ENCODE measurements at regions of chr5 and their contacts with region 1.

Region 1: DNA sequence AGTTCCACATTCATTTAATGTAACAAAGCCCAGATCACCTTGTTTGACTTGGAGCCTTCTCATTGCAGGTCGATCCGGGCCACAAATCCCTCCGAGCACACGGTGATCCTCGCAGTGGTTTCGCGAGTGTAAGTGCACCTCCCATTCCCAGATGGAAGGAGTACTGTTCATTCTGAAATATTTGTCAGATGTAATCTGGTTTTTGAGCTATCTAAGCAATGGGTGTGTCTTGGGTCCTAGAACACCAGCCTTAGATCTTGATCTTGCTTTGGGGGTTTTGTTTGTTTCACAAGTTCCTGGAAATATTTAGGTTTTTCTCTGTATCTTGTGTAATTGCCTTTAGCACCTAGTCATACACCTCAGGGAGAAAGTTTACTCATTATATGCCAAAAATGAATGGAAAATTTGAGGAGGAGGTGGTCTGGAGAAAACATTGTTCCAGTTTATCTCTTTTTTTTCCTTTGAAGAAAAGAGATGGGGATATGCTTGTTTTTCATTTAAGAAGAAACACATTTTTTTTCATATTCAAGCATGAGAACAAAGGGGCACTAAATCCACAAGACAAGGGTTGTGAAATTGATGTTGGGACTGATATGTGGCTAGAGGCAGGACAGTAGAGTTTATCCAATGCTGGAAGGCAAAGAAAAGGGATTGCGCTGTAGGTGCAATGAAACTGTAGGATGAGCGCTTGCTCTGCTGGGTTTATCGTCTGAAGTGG is 118.6 kb downstream of the PDE8B start:
- DNase-seq: no peak
- H3K4me3 Mint-ChIP-seq: peak overlapping the region; percentile 0
- H3K27ac Mint-ChIP-seq: peak overlapping the region; percentile 89
- H3K4me1 Mint-ChIP-seq: peaks cover 20% of the 10 kb centered on the region
- H3K27me3 Mint-ChIP-seq: peaks cover 8% of the 10 kb centered on the region

Region 2: GRCh38 chr5:77259476-77259875 is 69.6 kb before region 1 on chr5:
- intact Hi-C with region 1: loop called (anchors 1 kb)
- DNase-seq: no peak
- H3K4me3 Mint-ChIP-seq: no peak overlapping the region
- H3K27ac Mint-ChIP-seq: peak overlapping the region; percentile 62
- H3K4me1 Mint-ChIP-seq: peaks cover 7% of the 10 kb centered on the region
- H3K27me3 Mint-ChIP-seq: peaks cover 6% of the 10 kb centered on the region

Region 3: DNA sequence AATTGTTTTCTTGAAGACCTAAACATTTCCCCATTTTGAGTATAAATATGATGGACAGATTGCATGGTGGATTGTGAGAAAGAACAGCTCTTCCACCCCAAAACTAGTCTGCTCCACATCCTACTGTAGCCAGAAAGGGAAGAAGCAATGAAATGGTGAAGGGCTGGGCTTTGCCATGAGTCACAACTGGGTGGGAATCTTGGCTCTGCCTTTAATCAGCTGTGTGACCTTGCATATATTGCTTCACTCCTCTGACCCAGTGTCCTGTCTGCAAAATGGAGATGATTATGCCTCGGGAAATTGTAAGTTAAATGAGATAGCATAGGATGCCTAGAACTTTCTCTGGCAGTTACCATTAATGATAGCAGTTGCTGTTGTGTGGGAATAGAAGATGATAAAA is 16.7 kb before region 1 on chr5:
- intact Hi-C with region 1: no loop called
- DNase-seq: no peak
- H3K4me3 Mint-ChIP-seq: no peak overlapping the region
- H3K27ac Mint-ChIP-seq: no peak overlapping the region
- H3K4me1 Mint-ChIP-seq: no peaks in the 10 kb centered on the region
- H3K27me3 Mint-ChIP-seq: peaks cover 5% of the 10 kb centered on the region

Region 4: DNA sequence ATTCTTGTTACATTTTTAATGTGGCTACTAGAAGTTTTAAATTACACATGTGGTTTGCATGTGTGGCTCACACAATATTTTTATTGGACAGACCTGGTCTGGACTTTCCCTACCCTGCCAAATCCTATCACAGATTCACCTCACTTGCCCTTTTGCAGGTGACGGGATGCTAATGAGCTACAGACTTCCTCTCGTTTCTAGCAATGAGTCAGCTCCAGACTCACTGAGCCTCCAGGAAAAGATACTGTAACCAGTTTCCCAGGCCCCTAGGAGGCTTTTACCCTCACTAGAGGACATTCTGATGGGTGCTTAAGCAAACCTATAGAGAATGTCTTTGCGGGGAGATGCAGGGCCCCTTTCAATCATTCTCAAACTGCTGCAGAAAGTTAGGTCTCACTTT is 27.7 kb after region 1 on chr5:
- intact Hi-C with region 1: loop called (anchors 1 kb)
- DNase-seq: peak; percentile 26
- H3K4me3 Mint-ChIP-seq: no peak overlapping the region
- H3K27ac Mint-ChIP-seq: no peak overlapping the region
- H3K4me1 Mint-ChIP-seq: peaks cover 18% of the 10 kb centered on the region
- H3K27me3 Mint-ChIP-seq: peaks cover 10% of the 10 kb centered on the region

Region 5: DNA sequence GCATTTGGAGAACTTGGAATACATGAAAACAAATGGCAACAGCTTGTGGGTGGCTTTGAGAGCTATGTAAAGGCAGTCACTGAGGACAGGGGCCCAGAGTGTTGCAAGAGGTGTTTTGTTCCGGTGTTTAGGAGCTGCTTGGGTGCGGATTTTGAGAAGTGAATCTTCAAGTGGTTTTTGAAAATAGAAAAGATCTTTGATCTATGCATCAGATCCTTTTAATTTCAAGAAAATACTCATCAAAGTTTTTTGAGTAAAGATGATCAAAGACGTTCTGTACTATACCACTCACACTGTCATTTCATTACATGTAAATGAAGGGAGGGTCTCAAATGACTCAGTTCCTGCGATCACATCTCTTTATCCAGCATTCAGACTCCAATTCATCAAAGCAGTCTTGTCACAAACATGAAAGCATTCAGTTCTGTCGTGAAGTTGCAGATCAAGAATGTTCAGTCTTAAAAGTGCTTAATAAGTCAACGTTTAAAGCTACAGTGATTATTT is 50.5 kb after region 1 on chr5:
- intact Hi-C with region 1: loop called (anchors 1 kb)
- DNase-seq: peak; percentile 32
- H3K4me3 Mint-ChIP-seq: no peak overlapping the region
- H3K27ac Mint-ChIP-seq: peak overlapping the region; percentile 37
- H3K4me1 Mint-ChIP-seq: peaks cover 30% of the 10 kb centered on the region
- H3K27me3 Mint-ChIP-seq: peaks cover 2% of the 10 kb centered on the region